ENCODE measurements at regions of chr4 and their contacts with region 1.

Region 1: GRCh38 chr4:139940600-139940999 is 213.4 kb downstream of the MAML3 start:
- DNase-seq: no peak

Region 2: DNA sequence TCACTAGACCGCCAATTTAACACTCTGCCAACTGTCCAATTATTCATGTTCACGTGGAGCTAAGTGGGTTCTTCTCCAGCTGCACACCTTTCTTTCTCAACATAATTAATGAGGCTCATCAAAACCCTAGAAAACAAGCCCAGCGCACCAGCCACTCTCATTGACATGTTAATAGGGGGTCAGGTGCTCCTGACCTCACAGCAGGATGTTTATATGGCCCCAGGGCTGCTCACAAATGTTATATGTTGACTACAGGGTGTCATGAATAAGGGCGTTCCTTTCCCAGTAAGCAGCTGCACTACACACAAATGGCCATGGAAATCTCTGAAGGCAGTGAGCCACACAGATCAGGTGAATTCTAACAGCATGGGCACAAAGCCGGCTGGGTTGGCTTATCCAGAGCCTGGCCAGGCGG is 65.2 kb before region 1 on chr4:
- intact Hi-C with region 1: loop called in 1 of 2 experiments (anchors 2 kb)
- DNase-seq: no peak

Region 3: GRCh38 chr4:139961344-139961946 is 20.8 kb after region 1 on chr4:
- intact Hi-C with region 1: no loop called
- DNase-seq: no peak

Measured in posterior vena cava (tissue), 2 donors.